BJ (cell line): ENCODE measurements at regions of chr9 and their contacts with region 1.

Region 1: DNA sequence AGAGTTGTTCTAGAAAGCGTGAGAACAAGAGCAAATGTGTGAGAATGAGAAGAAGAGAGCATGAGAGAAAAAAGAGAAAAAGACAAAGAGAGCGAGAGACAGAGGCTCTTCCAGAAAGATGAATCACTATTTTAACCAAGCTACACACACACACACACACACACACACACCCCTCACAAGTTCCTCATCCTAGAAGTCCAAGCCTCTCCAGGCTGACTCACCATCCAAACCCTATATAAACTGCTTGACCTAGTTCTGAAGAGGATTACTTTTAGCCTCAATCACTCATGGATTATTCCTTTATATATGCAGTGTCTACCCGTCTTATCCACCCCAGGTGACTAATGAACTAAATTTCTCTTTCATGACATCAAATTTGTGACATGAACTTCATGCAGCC is 37.6 kb downstream of the C9orf57 start:
- DNase-seq: peak; percentile 47
- H3K4me3 ChIP-seq: no peak overlapping the region
- H3K27me3 ChIP-seq: no peaks in the 10 kb centered on the region
- CTCF ChIP-seq: no peak

Region 2: DNA sequence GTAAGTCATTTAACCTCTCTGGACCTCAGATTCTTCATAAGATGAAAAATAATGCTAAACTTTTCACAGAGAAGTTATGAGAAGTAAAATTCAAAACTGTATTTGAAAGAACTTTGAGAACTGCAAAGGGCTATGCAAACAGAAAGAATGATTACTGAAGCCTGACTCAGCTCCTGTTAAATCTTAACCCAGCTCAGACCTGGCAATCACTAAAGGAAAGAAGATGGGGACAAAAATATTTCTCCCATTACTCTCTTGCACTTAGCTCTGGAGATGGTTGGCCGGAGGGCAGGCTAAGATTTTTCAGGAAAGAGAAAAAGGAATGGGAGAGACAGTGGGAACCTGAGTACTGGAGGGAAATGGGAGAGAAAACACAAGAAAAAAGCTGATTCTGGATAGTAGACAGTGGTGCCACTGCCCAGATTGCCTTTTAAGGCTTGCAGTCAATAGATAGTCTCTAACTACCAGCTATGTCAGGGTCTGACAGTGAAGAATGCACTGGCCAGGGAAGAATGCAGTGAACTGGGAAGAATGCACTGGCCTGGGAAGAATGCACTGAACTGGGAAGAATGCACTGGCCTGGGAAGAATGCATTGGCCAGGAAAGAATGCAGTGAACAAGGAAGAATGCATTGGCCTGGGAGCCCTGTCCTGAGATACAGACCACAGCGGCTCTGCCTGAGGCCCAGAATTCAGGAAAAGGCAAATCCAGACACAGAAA is 229.3 kb before region 1 on chr9:
- CTCF ChIA-PET with region 1: interaction called, 11 read pairs
- POLR2A ChIA-PET with region 1: no interaction called
- DNase-seq: peak; percentile 13
- H3K4me3 ChIP-seq: no peak overlapping the region
- H3K27me3 ChIP-seq: no peaks in the 10 kb centered on the region
- CTCF ChIP-seq: no peak

Region 3: GRCh38 chr9:71806901-71807307 is 215.9 kb before region 1 on chr9:
- CTCF ChIA-PET with region 1: interaction called, 97 read pairs
- POLR2A ChIA-PET with region 1: no interaction called
- DNase-seq: no peak
- H3K4me3 ChIP-seq: no peak overlapping the region
- H3K27me3 ChIP-seq: no peaks in the 10 kb centered on the region
- CTCF ChIP-seq: peak; percentile 91

Region 4: GRCh38 chr9:71812385-71812784 is 210.5 kb before region 1 on chr9:
- CTCF ChIA-PET with region 1: interaction called, 97 read pairs
- POLR2A ChIA-PET with region 1: no interaction called
- DNase-seq: no peak
- H3K4me3 ChIP-seq: no peak overlapping the region
- H3K27me3 ChIP-seq: no peaks in the 10 kb centered on the region
- CTCF ChIP-seq: peak; percentile 15; the same call in 1 of the 2 replicates